Naive thymus-derived CD4-positive, alpha-beta T cell (primary cell): ENCODE measurements at regions of chr12 and their contacts with region 1.

Region 1: GRCh38 chr12:13179211-13180074 is 17.1 kb upstream of the EMP1 start:
- DNase-seq: peak in 8 of 9 donors; percentile 15 to 51 (median 44)
- ATAC-seq: peak; percentile 90
- H3K4me3 ChIP-seq: peak overlapping the region; percentile 22
- H3K4me3 Mint-ChIP-seq: peak overlapping the region; percentile 74 to 88 (median 78)
- H3K27ac ChIP-seq: no peak overlapping the region
- H3K27ac Mint-ChIP-seq: peak overlapping the region; percentile 57 to 88 (median 69)
- H3K4me1 ChIP-seq: peaks cover 0 to 16% of the 10 kb centered on the region in 2 donors
- H3K4me1 Mint-ChIP-seq: peaks cover 20 to 43% (median 33%) of the 10 kb centered on the region in 7 donors
- H3K27me3 ChIP-seq: peaks cover 0 to 3% of the 10 kb centered on the region in 2 donors
- H3K27me3 Mint-ChIP-seq: peaks cover 4 to 48% (median 7%) of the 10 kb centered on the region in 5 donors

Region 2: DNA sequence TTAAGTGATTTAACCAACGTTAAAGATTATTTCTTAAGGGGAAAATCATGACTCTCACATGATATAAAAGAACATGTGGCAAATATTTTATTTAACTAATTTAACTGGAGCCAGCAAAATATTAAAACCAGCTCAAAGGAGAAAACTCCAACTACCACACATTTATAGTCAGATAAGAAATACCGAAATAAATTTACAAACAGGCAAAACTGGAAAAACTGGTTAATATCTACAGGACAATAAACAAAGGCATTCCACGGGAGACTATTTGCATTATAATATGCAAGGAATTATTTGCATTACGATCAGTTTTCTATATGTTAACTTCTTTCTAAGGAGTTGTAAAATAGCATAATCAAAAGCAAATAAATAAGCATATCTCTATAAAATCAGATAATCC is 1122.5 kb before region 1 on chr12:
- CTCF ChIA-PET with region 1: no interaction called
- POLR2A ChIA-PET with region 1: no interaction called
- intact Hi-C with region 1: no loop called
- DNase-seq: no peak
- ATAC-seq: no peak
- H3K4me3 ChIP-seq: no peak overlapping the region
- H3K4me3 Mint-ChIP-seq: no peak overlapping the region
- H3K27ac ChIP-seq: no peak overlapping the region
- H3K27ac Mint-ChIP-seq: no peak overlapping the region
- H3K4me1 ChIP-seq: no peaks in the 10 kb centered on the region
- H3K4me1 Mint-ChIP-seq: peaks cover 0 to 2% (median 0%) of the 10 kb centered on the region in 7 donors
- H3K27me3 ChIP-seq: no peaks in the 10 kb centered on the region
- H3K27me3 Mint-ChIP-seq: peaks cover 0 to 13% (median 0%) of the 10 kb centered on the region in 5 donors

Region 3: GRCh38 chr12:13144266-13144828 is 35.1 kb before region 1 on chr12:
- CTCF ChIA-PET with region 1: interaction called, 3 read pairs
- POLR2A ChIA-PET with region 1: no interaction called
- intact Hi-C with region 1: loop called in 1 of 2 experiments (anchors 5 kb)
- DNase-seq: peak in 5 of 9 donors; percentile 1 to 20 (median 13)
- ATAC-seq: peak; percentile 46
- H3K4me3 ChIP-seq: no peak overlapping the region
- H3K4me3 Mint-ChIP-seq: peak overlapping the region in 7 of 10 donors; percentile 36 to 66 (median 47)
- H3K27ac ChIP-seq: peak overlapping the region; percentile 24
- H3K27ac Mint-ChIP-seq: peak overlapping the region; percentile 2 to 85 (median 64)
- H3K4me1 ChIP-seq: peaks cover 6 to 14% of the 10 kb centered on the region in 2 donors
- H3K4me1 Mint-ChIP-seq: peaks cover 18 to 38% (median 22%) of the 10 kb centered on the region in 7 donors
- H3K27me3 ChIP-seq: no peaks in the 10 kb centered on the region
- H3K27me3 Mint-ChIP-seq: peaks cover 0 to 4% (median 0%) of the 10 kb centered on the region in 5 donors

Region 4: GRCh38 chr12:13165617-13166041 is 13.8 kb before region 1 on chr12:
- CTCF ChIA-PET with region 1: no interaction called
- POLR2A ChIA-PET with region 1: interaction called, 4 read pairs
- intact Hi-C with region 1: loop called (anchors 2 kb)
- DNase-seq: peak; percentile 14 to 60 (median 46)
- ATAC-seq: peak; percentile 82
- H3K4me3 ChIP-seq: no peak overlapping the region
- H3K4me3 Mint-ChIP-seq: peak overlapping the region; percentile 5 to 63 (median 50)
- H3K27ac ChIP-seq: peak overlapping the region; percentile 1
- H3K27ac Mint-ChIP-seq: peak overlapping the region; percentile 11 to 82 (median 76)
- H3K4me1 ChIP-seq: peaks cover 13 to 24% of the 10 kb centered on the region in 2 donors
- H3K4me1 Mint-ChIP-seq: peaks cover 16 to 35% (median 23%) of the 10 kb centered on the region in 7 donors
- H3K27me3 ChIP-seq: no peaks in the 10 kb centered on the region
- H3K27me3 Mint-ChIP-seq: peaks cover 0 to 24% (median 0%) of the 10 kb centered on the region in 5 donors

Region 5: DNA sequence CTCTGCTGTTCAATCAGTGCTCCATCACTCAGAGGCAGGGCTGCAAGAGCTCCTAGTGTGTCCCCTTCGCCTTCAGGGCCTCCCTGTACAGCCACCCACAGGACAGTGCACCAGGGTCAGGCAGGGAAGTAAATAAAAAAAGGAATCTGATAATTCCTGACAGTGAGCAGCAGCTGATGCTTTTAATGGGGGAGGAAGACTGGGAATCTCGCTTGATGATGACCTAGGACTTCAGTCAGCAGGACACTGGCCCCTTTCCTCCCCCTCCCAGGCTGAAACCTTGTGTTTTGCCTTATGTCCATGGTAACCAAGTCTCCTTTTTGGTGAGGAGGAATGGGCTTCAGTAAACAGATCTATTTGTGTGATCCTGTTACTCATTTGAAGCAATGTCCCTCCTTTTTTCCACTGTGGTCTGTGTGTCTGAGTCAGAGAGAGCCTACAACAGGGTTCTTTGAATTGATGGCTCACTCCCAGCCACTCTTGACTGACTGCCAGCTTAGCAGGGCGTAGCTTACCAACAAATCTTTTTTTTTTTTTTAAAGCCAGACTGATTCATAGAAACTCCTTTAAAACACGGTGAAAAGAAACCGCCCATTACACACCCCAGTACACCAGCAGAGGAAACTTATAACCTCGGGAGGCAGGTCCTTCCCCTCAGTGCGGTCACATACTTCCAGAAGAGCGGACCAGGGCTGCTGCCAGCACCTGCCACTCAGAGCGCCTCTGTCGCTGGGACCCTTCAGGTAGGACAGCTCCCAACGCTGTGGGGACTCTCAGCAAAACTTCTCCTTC is 16.9 kb after region 1 on chr12 and contains the start of gene EMP1:
- CTCF ChIA-PET with region 1: no interaction called
- POLR2A ChIA-PET with region 1: no interaction called
- intact Hi-C with region 1: loop called (anchors 1 kb)
- DNase-seq: peak in 8 of 9 donors; percentile 34 to 78 (median 56)
- ATAC-seq: peak; percentile 89
- H3K4me3 ChIP-seq: peak within 1 kb of the TSS; percentile 18
- H3K4me3 Mint-ChIP-seq: peak within 1 kb of the TSS; percentile 69 to 91 (median 82)
- H3K27ac ChIP-seq: peak within 1 kb of the TSS; percentile 34
- H3K27ac Mint-ChIP-seq: peak within 1 kb of the TSS; percentile 36 to 92 (median 78)
- H3K4me1 ChIP-seq: peaks cover 8 to 11% of the 10 kb centered on the region in 2 donors
- H3K4me1 Mint-ChIP-seq: peaks cover 19 to 41% (median 22%) of the 10 kb centered on the region in 7 donors
- H3K27me3 ChIP-seq: no peaks in the 10 kb centered on the region
- H3K27me3 Mint-ChIP-seq: peaks cover 0 to 42% (median 4%) of the 10 kb centered on the region in 5 donors
- total RNA-seq, gene EMP1: 3.4 to 40.1 (median 4.4) TPM

Region 6: DNA sequence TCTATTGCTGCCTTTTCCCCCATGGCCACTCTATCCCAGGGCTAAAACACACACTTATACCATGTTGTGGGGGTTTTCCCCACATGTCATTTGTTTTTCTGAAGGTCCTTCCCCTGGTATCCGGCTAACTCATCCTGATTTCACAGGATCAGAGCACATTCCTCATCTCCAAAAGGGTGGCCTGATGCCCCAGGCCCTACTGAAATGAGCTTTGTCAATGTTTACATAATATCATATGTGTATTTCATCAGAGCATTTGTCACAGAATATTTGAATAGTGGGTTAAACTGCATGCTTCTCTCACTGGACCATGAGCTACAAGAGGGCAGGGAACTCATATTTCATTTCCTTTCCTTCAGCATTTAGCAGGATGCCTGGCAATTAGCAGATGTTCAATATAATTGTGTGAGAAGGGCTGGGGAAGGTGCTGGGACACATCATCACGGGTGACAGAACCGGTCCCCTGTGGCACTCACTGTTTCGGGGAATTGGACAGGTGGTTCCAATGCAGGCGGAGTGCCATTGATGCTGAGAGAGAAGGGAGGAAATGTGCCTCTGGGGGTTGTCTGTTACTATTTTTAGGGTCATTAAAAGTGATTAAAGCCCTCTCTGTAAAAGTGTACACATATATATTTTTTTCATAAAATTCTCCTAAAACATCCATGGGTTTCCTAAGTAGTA is 43.9 kb after region 1 on chr12:
- CTCF ChIA-PET with region 1: no interaction called
- POLR2A ChIA-PET with region 1: no interaction called
- intact Hi-C with region 1: no loop called
- DNase-seq: no peak
- ATAC-seq: no peak
- H3K4me3 ChIP-seq: no peak overlapping the region
- H3K4me3 Mint-ChIP-seq: no peak overlapping the region
- H3K27ac ChIP-seq: no peak overlapping the region
- H3K27ac Mint-ChIP-seq: no peak overlapping the region
- H3K4me1 ChIP-seq: no peaks in the 10 kb centered on the region
- H3K4me1 Mint-ChIP-seq: peaks cover 0 to 1% (median 0%) of the 10 kb centered on the region in 7 donors
- H3K27me3 ChIP-seq: peaks cover 0 to 6% of the 10 kb centered on the region in 2 donors
- H3K27me3 Mint-ChIP-seq: peaks cover 0 to 46% (median 18%) of the 10 kb centered on the region in 5 donors